B cell (primary cell): ENCODE measurements at regions of chr10 and their contacts with region 1.

Region 1: GRCh38 chr10:16809074-16809718 is 8.0 kb downstream of the RSU1 start:
- DNase-seq: peak; percentile 40
- ATAC-seq: no peak
- H3K4me3 ChIP-seq: no peak overlapping the region
- H3K4me3 Mint-ChIP-seq: no peak overlapping the region
- H3K27ac ChIP-seq: no peak overlapping the region
- H3K27ac Mint-ChIP-seq: no peak overlapping the region
- H3K4me1 ChIP-seq: peaks cover 2 to 5% of the 10 kb centered on the region in 2 donors
- H3K4me1 Mint-ChIP-seq: peaks cover 13% of the 10 kb centered on the region
- H3K27me3 ChIP-seq: no peaks in the 10 kb centered on the region
- H3K27me3 Mint-ChIP-seq: no peaks in the 10 kb centered on the region
- CTCF ChIP-seq: peak; percentile 57

Region 2: DNA sequence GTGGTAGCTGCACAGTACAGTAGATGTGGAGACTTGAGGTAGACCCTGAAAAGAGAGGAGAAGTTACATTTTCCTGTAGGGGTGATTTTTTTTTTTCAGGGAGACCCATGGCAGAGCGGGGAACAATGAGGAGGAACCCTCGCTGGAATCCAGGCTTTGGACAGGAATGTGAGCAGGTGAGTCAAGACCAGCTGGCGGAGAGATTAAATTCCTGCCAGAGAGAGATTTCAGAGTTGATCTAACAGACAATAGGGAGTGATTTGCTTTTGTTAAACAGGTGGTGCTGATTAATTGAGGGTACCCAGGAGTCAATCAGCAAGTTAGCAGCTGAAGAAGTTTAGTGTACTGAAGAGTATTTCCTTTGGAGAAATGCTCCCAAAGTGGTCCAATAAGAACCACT is 907.3 kb before region 1 on chr10:
- CTCF ChIA-PET with region 1: interaction called, 7 read pairs
- POLR2A ChIA-PET with region 1: no interaction called
- intact Hi-C with region 1: loop called (anchors 10 kb)
- DNase-seq: no peak
- ATAC-seq: no peak
- H3K4me3 ChIP-seq: no peak overlapping the region
- H3K4me3 Mint-ChIP-seq: no peak overlapping the region
- H3K27ac ChIP-seq: no peak overlapping the region
- H3K27ac Mint-ChIP-seq: no peak overlapping the region
- H3K4me1 ChIP-seq: no peaks in the 10 kb centered on the region
- H3K4me1 Mint-ChIP-seq: no peaks in the 10 kb centered on the region
- H3K27me3 ChIP-seq: peaks cover 0 to 4% (median 0%) of the 10 kb centered on the region in 4 experiments
- H3K27me3 Mint-ChIP-seq: peaks cover 24% of the 10 kb centered on the region
- CTCF ChIP-seq: no peak